ENCODE measurements at regions of chr2 and their contacts with region 1.

Region 1: GRCh38 chr2:101473911-101474701 is 806 bp downstream of the RFX8 start:
- DNase-seq: peak; percentile 67
- ATAC-seq: peak; percentile 60
- H3K4me3 Mint-ChIP-seq: peak overlapping the region; percentile 75
- H3K27ac Mint-ChIP-seq: peak overlapping the region; percentile 55
- H3K4me1 Mint-ChIP-seq: peaks cover 8% of the 10 kb centered on the region
- H3K27me3 Mint-ChIP-seq: no peaks in the 10 kb centered on the region

Region 2: GRCh38 chr2:101501443-101501842 is 27.3 kb after region 1 on chr2:
- CTCF ChIA-PET with region 1: no interaction called
- POLR2A ChIA-PET with region 1: interaction called, 10 read pairs
- intact Hi-C with region 1: no loop called
- DNase-seq: peak; percentile 25
- ATAC-seq: peak; percentile 76
- H3K4me3 Mint-ChIP-seq: no peak overlapping the region
- H3K27ac Mint-ChIP-seq: no peak overlapping the region
- H3K4me1 Mint-ChIP-seq: peaks cover 12% of the 10 kb centered on the region
- H3K27me3 Mint-ChIP-seq: no peaks in the 10 kb centered on the region

Region 3: DNA sequence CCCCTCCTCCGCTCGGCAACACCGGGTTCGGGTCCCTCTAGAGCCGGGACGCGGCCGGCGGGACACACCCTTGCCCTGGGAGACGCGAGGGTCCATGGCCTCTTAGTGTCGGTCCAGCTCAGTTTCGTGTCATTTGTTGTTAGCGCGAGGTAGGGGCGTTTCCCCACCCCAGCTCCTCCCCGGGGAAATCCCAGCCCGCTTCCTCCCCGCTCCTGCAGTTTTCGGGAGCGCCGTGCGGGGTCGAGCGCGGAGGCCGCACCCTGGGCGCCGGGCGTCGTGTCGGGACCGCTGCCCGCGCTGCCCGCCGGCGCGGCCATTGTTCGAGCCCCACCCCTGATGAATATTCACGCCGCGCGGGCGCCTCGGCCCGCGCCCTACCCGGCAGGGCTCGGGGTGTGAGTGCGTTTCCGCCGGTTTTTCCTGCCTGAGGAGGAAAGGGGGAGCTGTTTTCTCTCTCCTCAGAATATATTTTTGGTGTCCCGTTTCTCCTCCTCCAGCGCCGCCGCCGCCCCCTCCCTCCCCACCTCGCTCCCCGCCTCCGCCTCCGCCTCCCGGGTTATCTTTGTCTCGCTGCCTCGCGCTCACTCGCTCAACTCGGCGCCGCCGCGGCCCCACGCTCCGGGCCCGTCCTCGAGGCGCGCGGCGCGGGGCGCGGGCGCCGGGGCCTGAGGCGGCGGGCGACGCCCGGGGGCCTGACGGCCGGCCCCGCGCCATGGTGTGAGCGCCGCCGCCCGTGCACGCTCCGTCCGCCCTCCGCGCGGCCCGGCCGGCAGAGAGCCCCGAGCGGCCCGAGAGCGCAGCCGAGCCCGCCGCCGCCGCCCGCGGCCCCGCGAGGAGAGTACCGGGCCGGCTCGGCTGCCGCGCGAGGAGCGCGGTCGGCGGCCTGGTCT is 223.3 kb after region 1 on chr2 and contains the start of gene MAP4K4:
- CTCF ChIA-PET with region 1: no interaction called
- POLR2A ChIA-PET with region 1: no interaction called
- intact Hi-C with region 1: loop called in 1 of 2 experiments (anchors 2 kb)
- DNase-seq: peak; percentile 85
- ATAC-seq: peak; percentile 52
- H3K4me3 Mint-ChIP-seq: no peak within 1 kb of the TSS
- H3K27ac Mint-ChIP-seq: peak within 1 kb of the TSS; percentile 68
- H3K4me1 Mint-ChIP-seq: peaks cover 30% of the 10 kb centered on the region
- H3K27me3 Mint-ChIP-seq: no peaks in the 10 kb centered on the region
- total RNA-seq, gene MAP4K4: 62.3 to 70.2 TPM